AG04450 (cell line): ENCODE measurements at regions of chr1 and their contacts with region 1.

Region 1: GRCh38 chr1:79197421-79197820 is 190.9 kb upstream of the ADGRL4 start:
- DNase-seq: no peak
- H3K4me3 ChIP-seq: no peak overlapping the region
- H3K27ac ChIP-seq: no peak overlapping the region
- H3K27me3 ChIP-seq: no peaks in the 10 kb centered on the region
- CTCF ChIP-seq: peak; percentile 24; the same call in 1 of the 2 replicates

Region 2: GRCh38 chr1:78839704-78840277 is 357.6 kb before region 1 on chr1:
- CTCF ChIA-PET with region 1: interaction called, 47 read pairs
- POLR2A ChIA-PET with region 1: no interaction called
- DNase-seq: no peak
- H3K4me3 ChIP-seq: no peak overlapping the region
- H3K27ac ChIP-seq: no peak overlapping the region
- H3K27me3 ChIP-seq: no peaks in the 10 kb centered on the region
- CTCF ChIP-seq: peak; percentile 65

Region 3: DNA sequence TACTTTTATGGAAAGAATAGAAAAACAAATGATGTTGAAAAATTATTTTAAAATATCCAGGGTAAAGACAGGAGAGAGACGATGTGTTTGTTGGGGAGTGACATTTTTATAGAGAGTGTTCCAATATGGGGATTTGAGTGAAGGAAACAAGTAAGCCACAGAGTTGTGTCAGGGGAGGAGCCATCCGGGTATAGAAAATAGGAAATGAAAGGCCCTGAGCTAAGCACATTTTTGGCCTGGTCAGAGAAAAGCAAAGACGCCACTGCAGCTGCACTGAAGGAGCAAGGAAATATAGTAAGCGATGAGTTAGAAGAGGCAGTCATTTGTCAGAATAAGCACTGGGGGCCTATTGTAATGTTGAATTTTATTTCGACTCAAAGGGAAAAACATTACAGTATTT is 83.6 kb before region 1 on chr1:
- CTCF ChIA-PET with region 1: no interaction called
- POLR2A ChIA-PET with region 1: no interaction called
- DNase-seq: no peak
- H3K4me3 ChIP-seq: no peak overlapping the region
- H3K27ac ChIP-seq: no peak overlapping the region
- H3K27me3 ChIP-seq: no peaks in the 10 kb centered on the region
- CTCF ChIP-seq: no peak

Region 4: DNA sequence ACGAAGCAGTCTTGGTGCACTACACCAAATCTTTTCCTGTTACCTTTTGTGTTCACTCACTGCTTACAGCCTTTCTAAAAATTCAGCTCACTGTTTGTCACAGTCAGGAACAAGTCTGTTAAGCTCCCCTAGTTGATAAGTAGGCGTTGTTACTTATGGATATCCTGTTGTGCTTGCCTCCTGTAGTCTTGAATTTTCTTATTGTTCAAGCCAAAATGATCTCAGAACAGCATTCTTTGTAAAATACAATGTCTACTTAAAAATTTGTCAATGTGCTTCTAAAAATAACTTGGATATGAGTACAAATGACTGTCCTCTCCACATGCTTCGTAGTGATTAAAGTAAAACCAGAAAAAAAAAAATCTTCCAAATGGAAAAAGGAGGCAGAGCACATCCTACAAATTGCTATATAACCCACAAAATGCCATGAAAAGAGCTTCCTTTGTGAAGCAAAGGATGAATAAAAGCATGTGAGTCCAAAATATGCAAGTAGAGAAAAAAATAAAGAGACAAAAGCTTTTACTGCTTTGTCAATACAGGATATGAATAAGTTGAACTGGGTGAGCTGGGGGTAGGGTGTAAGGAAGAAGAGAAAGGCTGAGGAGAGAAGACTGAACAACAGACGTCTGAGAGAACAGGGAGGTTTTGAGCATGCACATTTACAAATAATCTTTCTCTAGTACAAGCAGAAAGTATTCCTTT is 38.0 kb after region 1 on chr1:
- CTCF ChIA-PET with region 1: no interaction called
- POLR2A ChIA-PET with region 1: no interaction called
- DNase-seq: no peak
- H3K4me3 ChIP-seq: no peak overlapping the region
- H3K27ac ChIP-seq: no peak overlapping the region
- H3K27me3 ChIP-seq: no peaks in the 10 kb centered on the region
- CTCF ChIP-seq: no peak